CD4-positive, alpha-beta T cell (primary cell): ENCODE measurements at regions of chr13 and their contacts with region 1.

Region 1: DNA sequence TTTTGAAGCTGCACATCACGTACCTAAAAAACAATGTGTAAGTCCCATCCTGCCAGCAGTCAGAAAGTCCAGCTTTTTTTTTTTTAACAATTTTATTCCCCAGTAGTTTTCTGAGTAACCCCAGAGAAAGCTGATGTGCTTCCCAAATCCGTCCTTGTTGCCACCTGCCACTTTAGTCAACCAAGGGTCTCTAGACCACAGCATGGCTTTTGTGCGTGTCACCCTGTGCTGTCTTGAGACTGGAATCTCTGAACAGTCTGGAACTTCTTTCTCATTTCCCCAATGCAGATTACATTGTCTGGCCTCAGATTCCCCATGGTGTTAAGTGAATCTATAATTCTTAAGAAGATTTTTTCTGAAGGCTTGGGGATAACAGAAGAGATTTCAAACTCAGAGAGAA is 289.2 kb upstream of the KLF12 start:
- DNase-seq: no peak
- ATAC-seq: no peak
- H3K4me3 ChIP-seq: no peak overlapping the region
- H3K4me3 Mint-ChIP-seq: no peak overlapping the region
- H3K27ac ChIP-seq: no peak overlapping the region
- H3K27ac Mint-ChIP-seq: no peak overlapping the region
- H3K4me1 ChIP-seq: no peaks in the 10 kb centered on the region
- H3K4me1 Mint-ChIP-seq: no peaks in the 10 kb centered on the region
- H3K27me3 ChIP-seq: no peaks in the 10 kb centered on the region
- H3K27me3 Mint-ChIP-seq: no peaks in the 10 kb centered on the region
- CTCF ChIP-seq: no peak

Region 2: GRCh38 chr13:72677431-72677830 is 1746.0 kb before region 1 on chr13:
- CTCF ChIA-PET with region 1: no interaction called
- POLR2A ChIA-PET with region 1: no interaction called
- intact Hi-C with region 1: no loop called
- DNase-seq: no peak
- ATAC-seq: no peak
- H3K4me3 ChIP-seq: no peak overlapping the region
- H3K4me3 Mint-ChIP-seq: no peak overlapping the region
- H3K27ac ChIP-seq: no peak overlapping the region
- H3K27ac Mint-ChIP-seq: no peak overlapping the region
- H3K4me1 ChIP-seq: no peaks in the 10 kb centered on the region
- H3K4me1 Mint-ChIP-seq: no peaks in the 10 kb centered on the region
- H3K27me3 ChIP-seq: no peaks in the 10 kb centered on the region
- H3K27me3 Mint-ChIP-seq: peaks cover 34% of the 10 kb centered on the region
- CTCF ChIP-seq: no peak

Region 3: DNA sequence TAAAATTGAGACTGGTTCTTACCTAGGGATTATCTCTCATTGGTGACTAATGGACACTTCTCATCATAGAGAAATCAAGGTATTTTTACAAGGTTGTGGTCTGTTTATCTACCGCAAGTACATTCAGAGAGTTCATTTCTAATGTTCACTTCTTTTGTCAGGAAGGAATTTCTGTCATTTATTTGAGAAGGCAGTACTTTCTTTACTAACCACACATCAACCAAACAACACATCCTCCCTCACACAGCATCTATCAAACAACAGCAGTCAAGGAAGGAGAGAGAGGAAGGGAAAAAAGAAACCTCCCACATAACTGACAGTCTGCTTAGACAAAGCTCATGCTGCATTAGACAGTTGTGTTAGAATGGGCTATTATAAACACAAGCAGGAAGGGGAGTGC is 106.9 kb before region 1 on chr13:
- CTCF ChIA-PET with region 1: no interaction called
- POLR2A ChIA-PET with region 1: no interaction called
- intact Hi-C with region 1: no loop called
- DNase-seq: peak in 1 of 14 experiments; percentile 11
- ATAC-seq: no peak
- H3K4me3 ChIP-seq: no peak overlapping the region
- H3K4me3 Mint-ChIP-seq: no peak overlapping the region
- H3K27ac ChIP-seq: no peak overlapping the region
- H3K27ac Mint-ChIP-seq: no peak overlapping the region
- H3K4me1 ChIP-seq: no peaks in the 10 kb centered on the region
- H3K4me1 Mint-ChIP-seq: peaks cover 14% of the 10 kb centered on the region
- H3K27me3 ChIP-seq: no peaks in the 10 kb centered on the region
- H3K27me3 Mint-ChIP-seq: no peaks in the 10 kb centered on the region
- CTCF ChIP-seq: no peak

Region 4: GRCh38 chr13:74389056-74389455 is 34.4 kb before region 1 on chr13:
- CTCF ChIA-PET with region 1: no interaction called
- POLR2A ChIA-PET with region 1: no interaction called
- intact Hi-C with region 1: no loop called
- DNase-seq: no peak
- ATAC-seq: no peak
- H3K4me3 ChIP-seq: no peak overlapping the region
- H3K4me3 Mint-ChIP-seq: no peak overlapping the region
- H3K27ac ChIP-seq: no peak overlapping the region
- H3K27ac Mint-ChIP-seq: no peak overlapping the region
- H3K4me1 ChIP-seq: no peaks in the 10 kb centered on the region
- H3K4me1 Mint-ChIP-seq: no peaks in the 10 kb centered on the region
- H3K27me3 ChIP-seq: no peaks in the 10 kb centered on the region
- H3K27me3 Mint-ChIP-seq: no peaks in the 10 kb centered on the region
- CTCF ChIP-seq: no peak

Region 5: GRCh38 chr13:74443631-74444030 is 20.2 kb after region 1 on chr13:
- CTCF ChIA-PET with region 1: no interaction called
- POLR2A ChIA-PET with region 1: no interaction called
- intact Hi-C with region 1: loop called in 1 of 2 experiments (anchors 2 kb)
- DNase-seq: no peak
- ATAC-seq: no peak
- H3K4me3 ChIP-seq: no peak overlapping the region
- H3K4me3 Mint-ChIP-seq: no peak overlapping the region
- H3K27ac ChIP-seq: no peak overlapping the region
- H3K27ac Mint-ChIP-seq: no peak overlapping the region
- H3K4me1 ChIP-seq: no peaks in the 10 kb centered on the region
- H3K4me1 Mint-ChIP-seq: no peaks in the 10 kb centered on the region
- H3K27me3 ChIP-seq: no peaks in the 10 kb centered on the region
- H3K27me3 Mint-ChIP-seq: no peaks in the 10 kb centered on the region
- CTCF ChIP-seq: no peak